ENCODE measurements at regions of chr1 and their contacts with region 1.

Region 1: DNA sequence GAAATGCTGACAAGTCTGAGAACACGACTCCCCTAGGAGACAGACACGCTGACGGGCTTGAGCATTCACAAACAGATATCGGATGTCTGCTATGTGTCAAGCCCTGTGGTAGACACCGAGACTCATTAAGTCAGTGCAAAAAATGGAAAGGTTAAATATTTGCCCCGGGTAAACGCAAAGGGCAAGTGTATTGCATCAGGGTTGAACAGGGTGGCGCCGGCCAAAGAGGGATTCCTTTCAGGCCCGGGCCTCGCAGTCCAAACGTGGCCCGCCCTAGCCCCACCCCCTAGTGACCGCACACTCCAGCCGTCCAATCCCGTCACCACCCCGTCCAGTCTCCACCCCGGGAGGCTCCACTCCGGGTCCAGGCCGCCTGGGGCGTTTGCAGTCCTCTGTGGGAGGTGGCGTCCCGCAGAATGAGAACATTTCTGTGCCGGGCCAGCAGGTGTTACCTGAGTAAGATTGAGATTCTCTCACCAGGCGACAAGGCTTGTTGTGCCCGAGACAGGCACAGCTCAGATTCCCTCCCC is 16.3 kb upstream of the TMEM9 start:
- DNase-seq: peak; percentile 92
- ATAC-seq: peak; percentile 90
- H3K4me3 Mint-ChIP-seq: peak overlapping the region; percentile 75
- H3K27ac Mint-ChIP-seq: peak overlapping the region; percentile 89
- H3K4me1 Mint-ChIP-seq: peaks cover 24% of the 10 kb centered on the region
- H3K27me3 Mint-ChIP-seq: peaks cover 7% of the 10 kb centered on the region
- CTCF ChIP-seq: no peak

Region 2: GRCh38 chr1:201154389-201155165 is 16.0 kb before region 1 on chr1 and contains the start of gene TMEM9:
- CTCF ChIA-PET with region 1: interaction called, 27 read pairs
- POLR2A ChIA-PET with region 1: interaction called, 24 read pairs
- intact Hi-C with region 1: no loop called
- DNase-seq: peak; percentile 98
- ATAC-seq: peak; percentile 97
- H3K4me3 Mint-ChIP-seq: peak within 1 kb of the TSS; percentile 80
- H3K27ac Mint-ChIP-seq: peak within 1 kb of the TSS; percentile 73
- H3K4me1 Mint-ChIP-seq: peaks cover 17% of the 10 kb centered on the region
- H3K27me3 Mint-ChIP-seq: peaks cover 13% of the 10 kb centered on the region
- CTCF ChIP-seq: no peak
- total RNA-seq, gene TMEM9: 28.7 to 30.6 TPM